ENCODE measurements at regions of chr15 and their contacts with region 1.

Region 1: GRCh38 chr15:93048759-93049161 is 40.3 kb downstream of the RGMA start:
- DNase-seq: no peak
- ATAC-seq: no peak
- H3K4me3 ChIP-seq: no peak overlapping the region
- H3K27ac ChIP-seq: no peak overlapping the region
- H3K4me1 ChIP-seq: no peaks in the 10 kb centered on the region
- CTCF ChIP-seq: no peak
- EP300 ChIP-seq: no peak
- POLR2A ChIP-seq: no peak
- RAD21 ChIP-seq: no peak

Region 2: DNA sequence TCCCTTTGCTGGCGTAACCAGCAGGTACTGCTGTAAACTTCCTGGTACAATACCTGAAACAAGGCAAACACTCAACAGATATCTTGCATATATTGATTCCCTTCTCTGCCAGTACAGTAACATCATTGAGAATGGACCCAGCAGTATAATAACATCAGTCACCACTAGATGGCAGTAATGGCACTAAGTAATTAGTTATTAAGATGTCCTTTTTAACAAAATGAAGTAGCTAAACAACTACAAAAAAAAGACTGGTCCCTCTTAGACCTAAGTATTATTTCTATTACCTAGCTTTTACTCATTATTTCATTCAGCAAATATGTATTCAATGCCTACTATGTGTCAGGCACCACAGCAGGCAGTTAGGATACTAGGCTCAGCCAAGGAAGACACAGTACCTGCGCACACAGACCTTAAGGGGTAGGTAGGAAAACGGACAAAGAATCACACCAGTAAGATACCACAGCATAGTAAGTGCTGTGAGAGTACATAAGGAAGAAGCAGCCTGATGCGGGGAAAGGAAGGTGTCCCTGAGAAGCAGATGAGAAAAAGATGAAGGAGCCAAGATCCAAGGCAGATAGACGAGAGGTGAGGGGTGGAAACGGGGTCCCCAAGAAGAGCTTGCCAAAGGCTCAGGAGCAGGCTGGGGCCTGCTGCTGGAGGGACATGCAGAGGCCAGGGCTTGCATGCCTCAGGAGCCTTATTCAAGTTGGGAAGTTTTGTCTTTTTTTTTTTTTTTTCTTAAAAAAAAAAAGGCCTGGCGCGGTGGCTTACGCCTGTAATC is 251.4 kb before region 1 on chr15:
- CTCF ChIA-PET with region 1: no interaction called
- POLR2A ChIA-PET with region 1: no interaction called
- DNase-seq: peak; percentile 79 to 84
- ATAC-seq: peak; percentile 78 to 81
- H3K4me3 ChIP-seq: no peak overlapping the region
- H3K27ac ChIP-seq: peak overlapping the region; percentile 77 to 81
- H3K4me1 ChIP-seq: peaks cover 25% of the 10 kb centered on the region
- CTCF ChIP-seq: peak; percentile 96
- EP300 ChIP-seq: no peak
- POLR2A ChIP-seq: no peak
- RAD21 ChIP-seq: peak; percentile 88 to 91

Region 3: GRCh38 chr15:93035953-93036800 is 12.6 kb before region 1 on chr15:
- CTCF ChIA-PET with region 1: interaction called, 114 read pairs
- POLR2A ChIA-PET with region 1: no interaction called
- DNase-seq: peak; percentile 61 to 87
- ATAC-seq: peak; percentile 62 to 75
- H3K4me3 ChIP-seq: no peak overlapping the region
- H3K27ac ChIP-seq: 0 out of 6 replicates have a peak overlapping the region, but pooled peaks of 1 of the 2 experiments have one; percentile 18
- H3K4me1 ChIP-seq: no peaks in the 10 kb centered on the region
- CTCF ChIP-seq: peak; percentile 69
- EP300 ChIP-seq: no peak
- POLR2A ChIP-seq: no peak
- RAD21 ChIP-seq: peak; percentile 43 to 46

Region 4: DNA sequence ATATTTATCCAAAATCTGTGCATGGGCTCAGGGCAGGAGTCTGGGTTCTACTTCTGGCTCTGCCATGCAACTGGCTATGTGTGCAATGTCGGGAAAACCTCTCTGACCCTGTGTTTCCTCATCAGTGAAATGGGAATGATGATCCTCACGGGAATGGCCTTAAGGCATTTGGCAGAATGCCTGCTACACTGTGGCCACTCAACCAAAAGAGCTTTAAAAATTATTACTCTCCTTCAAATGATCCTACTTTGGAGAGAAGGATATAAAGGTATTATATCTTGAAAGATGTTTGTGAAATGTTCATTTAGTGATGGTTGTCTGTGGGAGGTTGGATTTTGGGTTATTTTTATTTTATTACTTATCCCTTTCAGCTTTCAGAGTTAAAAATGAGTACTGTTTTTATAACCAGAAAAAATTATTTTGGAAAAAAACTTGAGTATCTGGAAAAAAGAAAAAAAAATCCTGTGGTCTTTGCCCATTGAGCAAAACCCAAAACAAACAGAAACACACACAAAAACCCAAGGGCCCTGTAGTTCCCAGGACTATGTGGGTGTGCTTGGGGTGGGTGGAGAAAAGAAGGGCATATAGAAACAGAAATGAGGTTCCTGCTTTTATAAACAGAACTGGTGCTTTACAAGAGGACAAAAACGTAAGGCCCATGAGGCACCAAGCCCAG is 18.2 kb after region 1 on chr15:
- CTCF ChIA-PET with region 1: no interaction called
- POLR2A ChIA-PET with region 1: no interaction called
- DNase-seq: no peak
- ATAC-seq: no peak
- H3K4me3 ChIP-seq: no peak overlapping the region
- H3K27ac ChIP-seq: no peak overlapping the region
- H3K4me1 ChIP-seq: peaks cover 4% of the 10 kb centered on the region
- CTCF ChIP-seq: no peak
- EP300 ChIP-seq: no peak
- POLR2A ChIP-seq: no peak
- RAD21 ChIP-seq: no peak

Region 5: GRCh38 chr15:93716615-93717231 is 668.0 kb after region 1 on chr15:
- CTCF ChIA-PET with region 1: no interaction called
- POLR2A ChIA-PET with region 1: no interaction called
- DNase-seq: no peak
- ATAC-seq: no peak
- H3K4me3 ChIP-seq: no peak overlapping the region
- H3K27ac ChIP-seq: no peak overlapping the region
- H3K4me1 ChIP-seq: no peaks in the 10 kb centered on the region
- CTCF ChIP-seq: no peak
- EP300 ChIP-seq: no peak
- POLR2A ChIP-seq: no peak
- RAD21 ChIP-seq: no peak

Measured in A549 (cell line).